Right ventricle myocardium inferior (tissue), 1 donor: ENCODE measurements at regions of chr5 and their contacts with region 1.

Region 1: GRCh38 chr5:172697123-172698121 is 56.4 kb downstream of the NEURL1B start:
- DNase-seq: peak; percentile 94
- ATAC-seq: peak; percentile 59

Region 2: DNA sequence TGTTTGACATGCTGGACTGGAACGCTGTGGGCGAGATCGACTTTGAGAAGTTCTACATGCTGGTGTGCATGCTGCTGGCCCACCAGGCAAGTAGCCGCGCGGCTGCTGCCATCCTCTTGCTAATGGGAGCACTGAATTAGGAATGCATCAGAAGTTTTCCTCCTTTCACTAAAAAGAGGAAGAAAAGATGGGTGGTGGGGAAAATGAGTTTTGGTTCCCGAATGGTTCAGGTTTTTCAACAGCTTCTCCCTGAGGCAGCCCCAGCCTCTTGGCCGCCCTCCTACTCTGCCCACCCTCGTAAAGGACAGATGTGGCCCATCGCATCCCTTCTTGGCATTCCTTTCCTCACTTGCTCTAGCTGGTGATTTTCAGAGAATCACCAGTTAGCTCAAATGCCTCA is 498.0 kb before region 1 on chr5:
- intact Hi-C with region 1: no loop called
- DNase-seq: no peak
- ATAC-seq: no peak

Region 3: DNA sequence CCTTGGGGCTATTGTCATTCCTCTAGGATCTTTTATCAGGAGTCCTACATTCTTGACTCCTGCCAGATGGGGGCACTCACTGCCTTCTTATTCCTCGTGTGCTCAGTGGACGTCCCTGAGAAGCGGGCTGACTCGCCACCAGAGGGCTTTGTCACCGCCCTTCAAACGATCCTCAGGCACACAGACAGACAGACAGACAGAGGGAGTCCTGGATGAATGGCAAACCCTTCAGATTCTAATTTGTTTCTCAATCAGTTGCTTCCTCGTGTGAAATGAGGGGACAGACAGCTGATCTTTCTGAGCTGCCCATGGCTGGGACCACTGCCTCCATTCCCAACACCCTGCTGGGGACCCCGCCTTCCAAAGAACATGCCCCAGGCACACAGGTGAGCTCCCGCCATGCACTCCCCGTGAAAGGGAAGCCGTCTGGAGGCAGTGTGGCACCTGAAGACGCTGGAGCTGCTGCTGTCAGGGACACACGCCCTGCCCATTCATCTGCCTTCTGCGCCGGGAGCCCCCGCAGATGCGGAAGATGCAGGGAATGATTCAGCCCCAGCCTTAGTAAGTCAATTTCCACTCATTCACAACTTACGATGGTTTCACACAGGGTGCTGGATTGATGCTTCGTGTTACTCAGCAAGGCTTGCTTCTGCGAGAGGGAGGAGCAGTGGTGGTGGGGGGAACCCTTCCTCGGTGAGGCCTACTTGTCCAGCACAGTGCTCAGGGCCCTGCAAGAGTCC is 218.2 kb before region 1 on chr5:
- intact Hi-C with region 1: loop called (anchors 1 kb)
- DNase-seq: peak; percentile 89
- ATAC-seq: peak; percentile 97

Region 4: GRCh38 chr5:172559004-172559932 is 138.2 kb before region 1 on chr5:
- intact Hi-C with region 1: loop called (anchors 5 kb)
- DNase-seq: peak; percentile 79
- ATAC-seq: peak; percentile 82

Region 5: DNA sequence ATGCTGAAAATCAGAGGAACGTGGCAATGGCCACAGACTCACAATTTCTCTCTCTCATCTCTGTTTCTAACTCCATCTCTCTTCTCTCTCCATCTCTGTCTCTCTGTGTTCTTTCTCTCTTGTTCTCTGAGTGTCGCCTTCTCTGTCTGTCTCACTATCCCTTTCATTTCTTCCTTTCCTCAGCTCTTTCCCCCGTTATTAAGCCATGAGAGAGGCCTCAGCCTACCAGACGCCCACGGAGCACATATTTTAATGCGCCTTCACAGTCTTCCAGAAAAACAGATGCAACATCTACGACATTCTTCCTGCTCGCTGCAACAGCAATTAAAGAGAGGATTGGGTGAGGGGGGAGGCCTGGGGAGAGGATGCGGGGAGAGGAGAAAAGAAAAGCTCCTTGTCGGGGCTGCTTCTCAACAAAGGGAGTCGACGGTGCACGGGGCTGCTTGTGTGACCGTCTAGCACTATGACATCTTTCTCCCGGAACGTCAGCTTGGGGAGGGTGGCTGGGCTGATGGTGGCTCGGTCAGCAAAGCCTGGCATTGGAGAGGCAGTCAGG is 94.1 kb before region 1 on chr5:
- intact Hi-C with region 1: loop called (anchors 5 kb)
- DNase-seq: no peak
- ATAC-seq: no peak

Region 6: DNA sequence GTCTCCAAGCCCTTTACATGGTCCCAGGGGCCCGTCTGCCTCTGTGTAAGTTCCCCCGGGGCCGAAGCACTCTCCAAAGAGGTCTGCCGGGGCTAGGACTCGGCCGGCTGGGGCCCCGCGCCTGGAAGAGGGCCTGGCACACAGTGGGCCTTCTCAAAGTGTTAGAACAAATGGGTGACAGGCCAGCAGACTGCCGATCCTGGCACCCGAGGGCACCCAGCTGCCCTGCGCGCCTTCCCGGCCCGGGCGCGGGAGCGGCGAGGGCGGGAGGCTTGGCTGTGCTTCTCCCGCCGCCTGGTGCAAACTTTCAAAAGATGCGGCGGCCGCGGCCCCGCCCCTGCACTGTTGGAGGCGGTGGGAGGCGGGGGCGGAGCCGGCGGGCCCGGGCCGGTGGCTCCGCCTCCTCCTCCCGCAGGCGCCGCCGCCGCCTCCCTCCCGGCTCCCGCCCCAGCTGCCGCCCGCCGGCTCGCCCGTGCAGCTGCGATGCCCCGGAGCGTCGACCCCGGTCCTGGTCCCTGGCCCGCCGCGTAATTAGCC is 56.5 kb before region 1 on chr5 and contains the start of gene NEURL1B:
- intact Hi-C with region 1: loop called (anchors 2 kb)
- DNase-seq: peak; percentile 91
- ATAC-seq: peak; percentile 89
- total RNA-seq, gene NEURL1B: 37.1 TPM

Region 7: DNA sequence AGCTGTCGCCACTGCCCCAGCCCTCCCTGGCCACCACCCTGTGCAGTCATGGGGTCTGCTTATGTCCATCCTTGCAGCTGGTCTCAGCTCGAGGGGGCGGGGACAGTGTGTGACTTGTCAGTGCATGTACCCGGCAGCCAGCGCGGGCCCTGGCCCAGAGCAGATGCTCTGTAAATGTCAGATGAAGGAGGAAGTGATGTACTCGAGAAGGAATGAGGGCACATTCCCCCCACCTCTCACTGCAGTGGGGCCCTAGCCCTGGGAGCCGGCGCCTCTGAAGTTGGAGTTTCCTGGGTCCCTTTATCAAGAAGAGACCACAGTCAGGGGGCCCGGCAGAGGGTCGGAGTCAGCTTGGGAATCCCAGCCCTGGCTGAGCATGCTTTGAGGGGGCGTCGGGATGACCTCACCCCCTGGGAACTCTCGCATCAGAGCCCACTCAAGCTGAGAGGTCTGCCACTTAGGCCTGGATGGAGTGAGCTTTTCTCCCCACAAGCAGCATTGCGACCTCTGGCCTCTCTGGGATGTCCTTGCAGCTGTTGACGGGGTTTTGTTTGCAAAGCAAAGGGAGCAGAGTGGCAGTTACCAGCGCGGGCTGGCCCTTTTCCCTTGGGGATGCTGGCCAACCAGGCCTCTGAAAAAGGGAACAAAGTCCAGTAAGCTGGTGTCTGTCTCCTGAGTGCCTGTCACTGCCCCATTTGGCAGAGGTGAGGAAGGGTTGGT is 37.4 kb before region 1 on chr5:
- intact Hi-C with region 1: loop called (anchors 5 kb)
- DNase-seq: peak; percentile 95
- ATAC-seq: peak; percentile 89

Region 8: GRCh38 chr5:172730981-172731679 is 33.7 kb after region 1 on chr5:
- intact Hi-C with region 1: no loop called
- DNase-seq: peak; percentile 52
- ATAC-seq: no peak